HepG2 (cell line): ENCODE measurements at regions of chr12 and their contacts with region 1.

Region 1: DNA sequence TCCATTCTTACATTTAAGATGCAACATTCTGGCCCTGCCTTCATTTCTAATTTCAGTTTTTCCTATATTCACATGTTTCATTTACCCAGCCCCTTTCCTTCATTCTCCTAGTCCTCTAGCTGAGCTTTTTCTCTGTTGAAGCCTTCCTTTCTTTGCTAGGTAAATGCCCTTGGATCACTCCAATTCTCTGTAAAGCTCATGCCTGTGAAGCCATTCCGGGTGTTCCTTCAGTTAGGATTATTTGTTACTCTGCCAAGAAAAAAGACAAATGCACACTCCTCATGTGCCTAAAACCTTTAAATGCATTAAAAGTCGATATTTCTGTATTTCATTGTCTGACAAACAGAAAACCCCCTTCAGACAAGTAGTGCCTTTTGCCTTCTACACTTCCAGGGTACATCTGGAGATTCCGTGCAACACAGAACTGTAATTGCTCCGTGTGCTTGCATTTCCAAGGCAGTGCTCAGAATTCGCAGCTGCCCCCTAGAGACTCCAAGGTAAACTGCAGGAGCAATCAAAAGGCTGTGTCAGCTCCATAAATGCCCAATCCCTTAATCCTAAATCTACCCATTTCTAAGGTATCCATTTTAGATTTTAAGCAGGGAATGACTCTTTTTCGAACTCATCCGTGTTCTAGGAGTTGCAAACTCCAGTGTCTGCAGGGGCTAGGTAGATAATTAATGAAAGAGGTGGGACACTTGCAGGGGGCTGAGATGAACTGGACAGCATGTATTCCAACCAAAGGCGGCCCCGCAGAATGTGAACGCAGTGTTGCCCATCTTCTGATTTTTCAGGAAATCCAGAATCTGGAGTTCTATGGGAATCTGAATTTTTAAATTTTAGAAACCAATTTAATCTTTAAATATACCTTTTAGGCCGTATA is 320.2 kb downstream of the GRIN2B start:
- DNase-seq: peak; percentile 17
- ATAC-seq: peak; percentile 88
- H3K4me3 ChIP-seq: no peak overlapping the region
- H3K27ac ChIP-seq: no peak overlapping the region
- H3K4me1 ChIP-seq: no peaks in the 10 kb centered on the region; the same call in 1 of the 2 replicates
- H3K27me3 ChIP-seq: peaks cover 0 to 6% of the 10 kb centered on the region in 2 experiments; a peak in 1 of 5 replicates
- CTCF ChIP-seq: peak; percentile 79
- EP300 ChIP-seq: no peak
- POLR2A ChIP-seq: no peak
- RAD21 ChIP-seq: 0 out of 2 replicates have a peak, but pooled peaks have one; percentile 19

Region 2: GRCh38 chr12:13278249-13278787 is 382.9 kb before region 1 on chr12:
- CTCF ChIA-PET with region 1: no interaction called
- POLR2A ChIA-PET with region 1: no interaction called
- in situ Hi-C with region 1: no loop called
- intact Hi-C with region 1: loop called (anchors 1 kb)
- DNase-seq: peak; percentile 26
- ATAC-seq: peak; percentile 99
- H3K4me3 ChIP-seq: peak overlapping the region in 1 of 3 experiments; percentile 34; a peak in 1 of 6 replicates
- H3K27ac ChIP-seq: no peak overlapping the region
- H3K4me1 ChIP-seq: no peaks in the 10 kb centered on the region
- H3K27me3 ChIP-seq: peaks cover 7 to 44% of the 10 kb centered on the region in 2 experiments; a peak in 3 of 5 replicates
- CTCF ChIP-seq: peak; percentile 88
- EP300 ChIP-seq: no peak
- POLR2A ChIP-seq: no peak
- RAD21 ChIP-seq: peak; percentile 43; the same call in 1 of the 2 replicates

Region 3: GRCh38 chr12:13362260-13362841 is 298.9 kb before region 1 on chr12:
- CTCF ChIA-PET with region 1: interaction called, 9 read pairs
- POLR2A ChIA-PET with region 1: no interaction called
- in situ Hi-C with region 1: no loop called
- intact Hi-C with region 1: loop called (anchors 1 kb)
- DNase-seq: peak; percentile 47
- ATAC-seq: peak; percentile 99
- H3K4me3 ChIP-seq: no peak overlapping the region
- H3K27ac ChIP-seq: no peak overlapping the region
- H3K4me1 ChIP-seq: no peaks in the 10 kb centered on the region
- H3K27me3 ChIP-seq: no peaks in the 10 kb centered on the region; a peak in 1 of 5 replicates
- CTCF ChIP-seq: peak; percentile 87
- EP300 ChIP-seq: no peak
- POLR2A ChIP-seq: no peak
- RAD21 ChIP-seq: peak; percentile 49

Region 4: GRCh38 chr12:13534645-13535398 is 126.4 kb before region 1 on chr12:
- CTCF ChIA-PET with region 1: no interaction called
- POLR2A ChIA-PET with region 1: no interaction called
- in situ Hi-C with region 1: no loop called
- intact Hi-C with region 1: loop called (anchors 10 kb)
- DNase-seq: peak; percentile 39
- ATAC-seq: peak; percentile 77
- H3K4me3 ChIP-seq: no peak overlapping the region
- H3K27ac ChIP-seq: no peak overlapping the region
- H3K4me1 ChIP-seq: no peaks in the 10 kb centered on the region
- H3K27me3 ChIP-seq: no peaks in the 10 kb centered on the region
- CTCF ChIP-seq: peak; percentile 65
- EP300 ChIP-seq: no peak
- POLR2A ChIP-seq: no peak
- RAD21 ChIP-seq: no peak